ENCODE measurements at regions of chr2 and their contacts with region 1.

Region 1: DNA sequence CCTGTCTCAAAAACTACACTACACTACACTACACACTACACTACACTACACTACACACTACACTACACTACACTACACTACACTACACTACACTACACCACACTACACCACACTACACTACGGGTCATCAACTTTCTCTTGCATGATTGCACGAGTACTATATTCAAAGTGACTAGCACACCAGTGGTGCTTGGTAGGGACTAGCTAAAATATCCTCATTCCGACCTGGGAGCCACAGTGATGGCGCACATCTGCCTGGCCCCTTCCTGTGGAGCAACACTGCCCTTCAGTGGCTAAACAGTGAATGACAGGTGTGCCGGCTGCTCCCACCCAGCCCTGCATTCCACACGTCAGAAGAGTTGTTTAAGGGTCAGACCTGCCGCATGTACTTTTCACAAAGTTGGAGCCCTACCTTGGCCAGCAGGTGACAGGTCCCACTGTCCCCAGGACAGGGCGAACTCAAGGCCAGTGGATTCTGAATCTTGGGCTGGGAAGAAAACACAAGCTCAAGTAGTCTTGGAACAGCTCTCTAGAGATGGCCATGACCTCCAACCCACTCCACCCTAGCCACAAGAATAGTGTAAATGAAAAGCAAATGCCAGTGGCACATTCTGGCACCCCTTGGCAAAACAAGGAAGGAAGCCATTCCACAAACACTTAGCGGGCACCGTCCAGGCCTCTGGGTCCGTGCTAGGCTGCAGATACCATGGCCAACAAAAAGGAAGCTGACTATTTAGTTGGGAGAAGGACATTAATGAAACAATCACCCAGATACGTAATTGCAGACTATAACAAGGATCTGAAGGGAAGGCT is 79.7 kb upstream of the MSH2 start:
- DNase-seq: peak; percentile 90

Region 2: GRCh38 chr2:46915811-46916630 is 407.2 kb before region 1 on chr2:
- intact Hi-C with region 1: loop called in 1 of 2 experiments (anchors 10 kb)
- DNase-seq: peak; percentile 97

Measured in posterior vena cava (tissue), 2 donors.